Activated CD4-positive, alpha-beta T cell treated with anti-CD3 and anti-CD28 coated beads for 36 hours (primary cell): ENCODE measurements at regions of chr5 and their contacts with region 1.

Region 1: GRCh38 chr5:179530069-179530998 is 20.0 kb upstream of the RUFY1 start:
- DNase-seq: peak; percentile 82
- ATAC-seq: peak; percentile 95
- H3K4me3 Mint-ChIP-seq: peak overlapping the region; percentile 57
- H3K27ac Mint-ChIP-seq: peak overlapping the region; percentile 31
- H3K4me1 Mint-ChIP-seq: peaks cover 13% of the 10 kb centered on the region
- H3K27me3 Mint-ChIP-seq: no peaks in the 10 kb centered on the region

Region 2: GRCh38 chr5:179559284-179560252 is 29.2 kb after region 1 on chr5:
- CTCF ChIA-PET with region 1: no interaction called
- POLR2A ChIA-PET with region 1: no interaction called
- intact Hi-C with region 1: loop called in 1 of 2 experiments (anchors 1 kb)
- DNase-seq: peak; percentile 97
- ATAC-seq: peak; percentile 100
- H3K4me3 Mint-ChIP-seq: peak overlapping the region; percentile 82
- H3K27ac Mint-ChIP-seq: peak overlapping the region; percentile 80
- H3K4me1 Mint-ChIP-seq: peaks cover 17% of the 10 kb centered on the region
- H3K27me3 Mint-ChIP-seq: no peaks in the 10 kb centered on the region

Region 3: GRCh38 chr5:179596421-179596820 is 66.1 kb after region 1 on chr5:
- CTCF ChIA-PET with region 1: no interaction called
- POLR2A ChIA-PET with region 1: no interaction called
- intact Hi-C with region 1: no loop called
- DNase-seq: no peak
- ATAC-seq: no peak
- H3K4me3 Mint-ChIP-seq: no peak overlapping the region
- H3K27ac Mint-ChIP-seq: no peak overlapping the region
- H3K4me1 Mint-ChIP-seq: no peaks in the 10 kb centered on the region
- H3K27me3 Mint-ChIP-seq: no peaks in the 10 kb centered on the region

Region 4: DNA sequence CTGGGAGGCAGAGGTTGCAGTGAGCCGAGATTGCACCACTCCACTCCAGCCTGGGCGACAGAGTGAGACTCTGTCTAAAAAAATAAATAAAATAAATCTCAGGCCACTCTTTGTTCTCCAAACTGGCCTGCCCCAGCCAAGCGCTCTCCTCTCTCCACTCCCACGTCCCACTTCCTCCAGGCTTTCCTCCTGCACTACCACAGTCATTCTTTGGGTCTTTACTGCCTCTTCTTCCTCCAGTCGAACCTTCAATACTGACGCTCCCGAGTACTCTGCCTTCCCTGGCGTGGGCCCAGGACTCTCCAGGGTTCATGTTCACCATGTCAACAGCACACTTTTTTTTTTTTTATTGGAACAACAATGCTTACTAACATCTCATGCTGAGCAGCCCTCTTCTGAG is 517.3 kb after region 1 on chr5:
- CTCF ChIA-PET with region 1: no interaction called
- POLR2A ChIA-PET with region 1: no interaction called
- intact Hi-C with region 1: no loop called
- DNase-seq: no peak
- ATAC-seq: no peak
- H3K4me3 Mint-ChIP-seq: no peak overlapping the region
- H3K27ac Mint-ChIP-seq: no peak overlapping the region
- H3K4me1 Mint-ChIP-seq: peaks cover 3% of the 10 kb centered on the region
- H3K27me3 Mint-ChIP-seq: no peaks in the 10 kb centered on the region